SK-MEL-5 (cell line): ENCODE measurements at regions of chr7 and their contacts with region 1.

Region 1: DNA sequence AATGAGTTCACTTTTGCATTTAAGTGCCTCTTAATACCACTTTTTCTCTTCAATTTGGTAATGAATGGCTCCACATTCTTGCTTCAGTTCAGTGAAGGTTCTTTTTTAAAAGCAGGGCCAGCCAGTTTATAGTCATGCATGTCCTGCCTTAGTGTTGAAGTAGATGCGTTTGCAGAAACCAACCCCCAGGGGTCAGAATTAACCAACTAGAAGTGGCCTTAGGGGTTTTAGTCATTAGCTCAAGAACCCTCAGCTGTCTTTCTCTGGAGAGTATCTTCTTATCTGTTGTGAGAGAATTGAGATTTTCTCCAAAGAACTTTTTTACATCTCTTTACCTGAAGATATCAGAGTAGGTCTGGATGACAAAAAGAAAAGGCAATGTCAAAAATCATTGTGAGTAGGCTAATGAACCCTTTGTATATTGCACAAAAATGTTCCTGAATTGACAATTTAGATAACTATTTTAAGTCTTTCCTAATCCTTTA is 82.2 kb downstream of the PIK3CG start:
- DNase-seq: peak; percentile 92

Region 2: DNA sequence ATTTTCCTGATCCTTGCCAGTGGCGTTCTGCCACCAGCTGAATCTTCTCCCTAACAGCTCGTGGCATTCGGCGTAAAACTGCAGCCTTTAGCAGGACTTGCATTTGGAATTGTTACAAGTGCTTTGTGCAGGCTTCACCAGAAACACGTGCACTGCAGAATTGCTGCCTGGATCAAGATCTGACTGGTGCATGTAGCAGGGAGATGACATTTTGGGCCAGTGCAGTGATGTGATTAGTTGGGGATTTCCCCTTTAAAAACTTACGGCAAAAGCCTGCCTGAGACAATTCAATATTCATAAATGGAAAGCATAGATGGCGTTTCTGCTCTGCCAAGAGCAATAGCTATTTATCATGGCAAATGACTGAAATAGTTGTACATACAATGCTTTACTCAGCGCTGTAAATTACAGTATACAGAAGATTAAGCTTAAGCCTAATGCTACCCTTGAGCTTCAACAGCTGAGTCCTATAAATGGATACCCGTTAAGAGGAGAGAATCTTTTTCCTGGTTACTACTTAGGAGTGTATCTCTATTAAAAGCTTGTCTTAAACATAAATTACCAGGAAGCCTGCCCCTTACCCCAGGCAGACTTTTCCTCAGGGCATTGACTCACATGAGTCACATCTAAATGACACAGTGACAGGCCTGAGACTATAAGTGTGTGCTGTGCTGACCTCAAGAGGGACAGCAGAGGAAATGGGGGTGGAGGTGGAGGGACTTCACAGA is 1177.2 kb before region 1 on chr7:
- in situ Hi-C with region 1: no loop called
- DNase-seq: peak; percentile 21

Region 3: DNA sequence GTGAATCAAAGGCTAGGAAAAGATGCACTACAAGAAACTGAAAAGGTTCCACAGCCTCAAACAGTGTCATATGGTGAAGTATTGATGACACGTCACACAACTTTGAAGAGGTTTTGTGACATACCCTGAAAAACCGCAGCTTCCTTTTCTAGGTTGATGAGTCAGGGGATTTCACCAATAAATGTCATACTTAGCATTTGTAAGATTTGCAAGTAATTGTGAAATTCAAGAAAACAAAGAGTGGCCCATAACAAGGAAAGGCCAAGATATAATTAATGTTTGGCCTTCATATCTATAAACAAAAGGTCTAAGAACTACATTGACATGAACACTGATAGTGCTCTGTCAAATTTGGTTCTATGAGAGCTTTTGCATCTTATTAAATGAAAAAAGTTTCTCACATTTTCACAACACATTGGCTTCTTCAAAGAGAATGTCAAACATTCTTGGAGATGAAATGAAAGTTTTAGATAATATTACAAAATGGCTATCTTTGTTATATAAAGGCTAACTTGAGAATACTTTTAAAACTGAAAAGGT is 600.5 kb before region 1 on chr7:
- in situ Hi-C with region 1: no loop called
- DNase-seq: peak; percentile 94

Region 4: GRCh38 chr7:106793015-106793975 is 154.0 kb before region 1 on chr7:
- in situ Hi-C with region 1: loop called (anchors 25 kb)
- DNase-seq: peak; percentile 72

Region 5: DNA sequence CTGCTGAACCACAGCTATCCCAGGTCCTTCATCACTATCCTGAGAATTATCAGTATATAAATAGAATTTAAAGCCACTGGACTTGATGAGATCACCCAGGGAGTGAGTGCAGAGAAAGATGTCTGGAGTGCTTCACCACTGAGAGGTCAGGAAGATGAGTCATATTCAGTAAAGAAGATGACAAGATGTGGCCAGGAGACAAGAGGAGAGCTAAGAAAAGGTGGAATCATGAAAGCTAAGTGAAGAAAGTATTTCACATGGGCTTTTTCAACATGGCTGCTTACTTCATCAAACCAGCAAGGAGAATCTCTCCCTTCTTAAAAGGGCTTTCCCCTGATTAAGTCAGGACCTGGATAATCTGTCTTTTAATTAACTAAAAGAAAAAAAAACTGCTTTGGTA is 88.2 kb after region 1 on chr7:
- in situ Hi-C with region 1: no loop called
- DNase-seq: no peak